ENCODE measurements at regions of chr1 and their contacts with region 1.

Region 1: GRCh38 chr1:7070389-7071029 is 285.3 kb downstream of the CAMTA1 start:
- ATAC-seq: peak; percentile 75 to 98 (median 84)
- H3K4me3 ChIP-seq: peak overlapping the region in 4 of 5 donors; percentile 0 to 23 (median 16)
- H3K27ac ChIP-seq: no peak overlapping the region
- H3K4me1 ChIP-seq: peaks cover 15 to 17% of the 10 kb centered on the region in 2 donors

Region 2: DNA sequence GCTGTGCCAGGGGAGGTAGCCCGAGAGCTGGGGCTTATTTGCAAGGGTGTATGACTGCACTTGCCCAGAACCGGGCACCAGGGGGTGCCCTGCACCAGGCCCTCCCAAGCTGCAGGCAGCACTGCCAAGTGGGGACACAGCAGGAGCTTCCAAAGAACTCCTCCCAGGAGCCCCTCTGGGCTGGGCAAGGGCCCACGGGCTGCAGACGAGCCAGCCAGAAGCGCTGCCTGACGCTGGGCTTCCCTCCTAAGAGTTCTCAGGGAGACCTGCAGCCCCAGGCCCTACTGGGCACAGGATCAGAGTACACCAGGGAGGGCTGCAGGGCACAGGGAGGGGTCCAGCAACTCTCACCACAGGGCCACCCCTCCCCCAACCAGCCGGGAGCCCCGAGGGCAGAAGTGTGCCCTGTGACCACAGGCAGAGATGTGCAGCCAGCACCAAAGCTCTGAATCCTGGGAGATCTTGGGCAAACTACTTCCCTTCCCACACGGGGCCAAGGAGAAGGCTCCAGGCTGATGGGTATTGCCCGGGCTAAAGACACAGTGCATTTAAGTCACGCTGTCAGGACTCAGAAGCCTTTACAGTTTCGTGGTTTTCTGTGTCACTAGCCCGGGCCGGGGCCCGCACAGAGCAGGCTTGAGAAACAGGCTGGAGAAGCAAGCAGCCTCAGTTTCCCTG is 961.4 kb before region 1 on chr1:
- in situ Hi-C with region 1: no loop called
- ATAC-seq: peak; percentile 64 to 97 (median 76)
- H3K4me3 ChIP-seq: no peak overlapping the region
- H3K27ac ChIP-seq: no peak overlapping the region
- H3K4me1 ChIP-seq: no peaks in the 10 kb centered on the region

Region 3: GRCh38 chr1:6701437-6702153 is 368.9 kb before region 1 on chr1 and contains the start of gene DNAJC11:
- in situ Hi-C with region 1: loop called in 1 of 9 experiments (anchors 25 kb)
- ATAC-seq: peak; percentile 89 to 96 (median 94)
- H3K4me3 ChIP-seq: peak within 1 kb of the TSS; percentile 65 to 96 (median 73)
- H3K27ac ChIP-seq: peak within 1 kb of the TSS; percentile 90 to 91
- H3K4me1 ChIP-seq: peaks cover 8 to 11% of the 10 kb centered on the region in 2 donors
- total RNA-seq, gene DNAJC11: 25.9 to 87.2 (median 45.7) TPM

Region 4: GRCh38 chr1:6784560-6785317 is 285.8 kb before region 1 on chr1:
- in situ Hi-C with region 1: loop called in 1 of 9 experiments (anchors 25 kb)
- ATAC-seq: peak; percentile 80 to 88 (median 86)
- H3K4me3 ChIP-seq: peak overlapping the region; percentile 65 to 97 (median 82)
- H3K27ac ChIP-seq: peak overlapping the region; percentile 89 to 90
- H3K4me1 ChIP-seq: peaks cover 7 to 16% of the 10 kb centered on the region in 2 donors

Region 5: DNA sequence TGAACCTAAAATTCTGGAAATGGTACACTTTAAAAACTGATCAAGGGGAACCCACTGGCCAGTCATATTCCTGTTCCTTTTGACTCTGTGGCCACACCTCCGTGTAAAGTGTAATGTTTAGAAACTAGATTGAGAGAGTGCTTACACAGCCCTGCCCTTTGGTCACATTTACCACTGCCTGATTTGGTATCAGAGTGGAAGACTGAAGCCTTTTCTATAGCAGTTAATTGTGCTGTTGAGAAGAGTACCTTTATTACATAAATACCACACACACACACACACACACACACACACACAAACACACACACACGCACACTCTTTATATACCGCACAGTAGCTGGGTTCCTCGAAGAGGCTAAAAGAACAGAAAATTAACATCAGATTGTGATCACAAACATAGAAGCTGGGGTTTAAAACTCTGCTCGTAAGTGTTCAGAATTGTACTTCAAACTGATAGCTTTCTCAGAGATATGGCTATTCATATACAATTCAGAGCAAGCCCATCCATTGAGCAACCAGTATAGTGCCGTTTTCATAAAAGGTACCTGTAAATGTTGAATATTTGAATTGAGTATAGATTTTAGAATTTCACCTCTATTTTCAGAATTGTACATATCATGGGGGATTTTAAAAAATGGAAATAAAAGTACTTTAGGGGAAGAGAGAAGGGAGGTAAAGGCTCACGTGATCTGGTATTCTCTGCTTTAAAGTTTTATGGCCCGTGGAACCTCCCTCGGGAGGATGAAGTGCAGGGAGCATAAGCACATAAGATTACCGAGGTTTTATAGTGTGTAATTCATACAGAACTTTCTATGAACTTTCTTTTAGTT is 247.8 kb before region 1 on chr1:
- in situ Hi-C with region 1: loop called in 1 of 9 experiments (anchors 25 kb)
- ATAC-seq: peak in 6 of 8 experiments; percentile 16 to 42 (median 24)
- H3K4me3 ChIP-seq: no peak overlapping the region
- H3K27ac ChIP-seq: no peak overlapping the region
- H3K4me1 ChIP-seq: peaks cover 2 to 10% of the 10 kb centered on the region in 2 donors

Region 6: DNA sequence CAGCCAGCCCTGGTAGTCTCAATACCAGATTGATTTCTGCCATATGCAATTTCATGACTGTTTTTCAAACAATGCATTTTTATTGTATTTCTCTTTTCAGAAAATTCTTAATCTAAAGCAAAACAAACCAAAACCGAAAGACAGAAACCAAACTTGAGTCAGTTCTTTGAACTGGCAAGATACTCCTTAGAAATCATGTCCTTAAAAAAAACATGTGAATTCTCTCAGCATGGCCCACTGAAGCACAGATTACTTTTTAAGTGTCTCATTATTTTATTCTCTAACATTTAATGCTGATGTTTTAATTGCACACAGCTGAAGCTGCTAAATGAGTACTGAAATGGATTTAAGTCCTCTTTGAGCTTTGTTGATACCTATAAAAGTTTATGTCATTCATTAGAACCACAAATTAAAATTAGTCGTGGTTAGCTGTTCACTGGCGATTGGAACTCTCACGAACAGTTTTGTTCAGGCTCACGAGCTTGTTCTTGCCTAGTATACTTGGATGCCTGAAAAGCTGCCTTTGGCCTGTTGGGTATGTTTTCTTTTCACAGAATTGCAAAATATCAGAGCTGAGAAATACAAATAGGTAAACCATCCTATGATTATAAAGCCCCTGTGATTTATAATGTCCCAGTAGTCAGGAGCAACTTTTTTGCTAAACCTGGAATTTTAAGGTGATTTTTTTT is 197.8 kb before region 1 on chr1:
- in situ Hi-C with region 1: no loop called
- ATAC-seq: no peak
- H3K4me3 ChIP-seq: no peak overlapping the region
- H3K27ac ChIP-seq: no peak overlapping the region
- H3K4me1 ChIP-seq: peaks cover 35 to 37% of the 10 kb centered on the region in 2 donors